ENCODE measurements at regions of chr12 and their contacts with region 1.

Region 1: DNA sequence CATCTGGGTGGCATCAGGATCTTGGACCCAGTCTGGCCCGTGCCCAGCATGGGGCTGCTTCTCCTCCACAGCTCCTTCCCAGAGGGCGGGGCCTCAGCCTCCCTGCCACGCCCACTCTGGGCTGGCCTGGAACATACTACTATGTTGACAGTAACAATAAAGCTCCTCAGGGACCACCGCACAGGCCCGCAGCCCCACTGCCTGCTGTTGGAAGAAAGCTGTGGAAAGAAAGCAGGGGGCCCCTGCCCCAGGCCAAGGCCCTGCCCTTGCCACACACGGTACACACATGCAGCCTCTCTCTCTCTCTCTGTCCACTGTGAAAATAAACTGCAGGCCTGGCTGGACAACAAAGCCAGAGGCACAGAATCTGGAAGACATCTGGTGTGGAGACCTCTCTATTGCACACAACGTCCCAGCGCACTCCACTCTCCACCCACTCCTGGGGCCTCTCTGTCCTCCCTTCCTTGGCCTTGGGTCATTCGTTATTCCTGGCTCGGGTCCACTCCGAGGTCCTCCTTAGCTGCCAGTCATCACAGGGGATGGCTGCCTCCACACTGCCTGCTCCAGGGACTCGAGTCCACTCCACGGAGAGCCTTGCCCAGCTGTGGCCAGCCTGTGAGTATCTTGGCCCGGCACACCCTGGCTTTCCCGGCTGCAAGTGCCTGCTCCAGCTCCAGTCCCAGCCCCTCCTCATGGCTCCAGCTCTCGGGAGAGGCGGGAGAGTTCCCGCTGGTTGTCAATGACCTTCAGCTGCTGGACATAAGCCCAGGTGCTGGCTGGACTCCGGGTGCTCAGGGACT is 11.8 kb upstream of the ENDOU start:
- DNase-seq: no peak
- CTCF ChIP-seq: no peak

Region 2: DNA sequence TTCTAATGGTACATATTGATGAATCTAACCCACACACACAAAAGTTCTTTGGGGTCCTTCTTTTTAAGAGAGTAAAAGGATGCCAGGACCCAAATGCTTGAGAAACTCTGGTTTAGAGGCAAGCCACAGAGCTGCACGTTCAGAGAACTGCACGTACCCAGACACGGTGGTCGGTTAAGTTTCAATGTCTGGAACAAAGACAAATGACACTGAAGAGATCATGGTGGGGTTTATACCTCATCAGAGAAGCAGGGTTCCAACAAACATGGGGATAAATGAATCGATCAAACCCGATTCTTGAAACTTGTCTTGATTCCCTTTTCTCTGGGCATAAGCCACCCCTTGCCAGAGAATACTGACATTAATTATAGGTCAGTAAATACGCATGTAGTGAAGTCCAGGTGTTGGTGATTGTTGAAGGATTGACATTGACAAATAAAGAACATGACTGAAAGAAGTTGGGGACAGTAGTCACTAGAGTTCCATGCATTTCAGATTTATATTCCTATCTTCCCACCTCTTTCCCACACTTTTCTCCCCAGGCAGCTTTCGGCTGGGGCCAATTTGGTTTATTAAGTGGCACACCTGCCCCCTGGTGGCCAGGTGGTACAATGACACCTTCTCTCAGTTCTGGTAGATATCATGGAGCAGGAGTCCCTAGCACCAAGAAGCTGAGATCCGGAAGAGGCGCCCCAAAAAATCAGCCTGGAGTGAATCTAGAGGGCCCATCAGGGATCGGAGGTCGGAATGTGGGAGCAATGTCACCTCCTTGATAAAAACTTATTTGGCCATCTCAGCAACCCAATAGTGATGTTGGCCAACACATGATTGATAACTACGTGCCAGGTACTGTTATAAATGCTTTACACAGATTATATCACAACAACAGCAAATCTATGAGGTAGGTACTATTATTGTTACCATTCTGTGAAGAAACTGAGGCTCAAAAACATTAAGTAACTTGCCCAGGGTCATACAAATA is 100.4 kb after region 1 on chr12:
- in situ Hi-C with region 1: loop called (anchors 10 kb)
- DNase-seq: peak; percentile 68
- CTCF ChIP-seq: peak; percentile 90

Region 3: DNA sequence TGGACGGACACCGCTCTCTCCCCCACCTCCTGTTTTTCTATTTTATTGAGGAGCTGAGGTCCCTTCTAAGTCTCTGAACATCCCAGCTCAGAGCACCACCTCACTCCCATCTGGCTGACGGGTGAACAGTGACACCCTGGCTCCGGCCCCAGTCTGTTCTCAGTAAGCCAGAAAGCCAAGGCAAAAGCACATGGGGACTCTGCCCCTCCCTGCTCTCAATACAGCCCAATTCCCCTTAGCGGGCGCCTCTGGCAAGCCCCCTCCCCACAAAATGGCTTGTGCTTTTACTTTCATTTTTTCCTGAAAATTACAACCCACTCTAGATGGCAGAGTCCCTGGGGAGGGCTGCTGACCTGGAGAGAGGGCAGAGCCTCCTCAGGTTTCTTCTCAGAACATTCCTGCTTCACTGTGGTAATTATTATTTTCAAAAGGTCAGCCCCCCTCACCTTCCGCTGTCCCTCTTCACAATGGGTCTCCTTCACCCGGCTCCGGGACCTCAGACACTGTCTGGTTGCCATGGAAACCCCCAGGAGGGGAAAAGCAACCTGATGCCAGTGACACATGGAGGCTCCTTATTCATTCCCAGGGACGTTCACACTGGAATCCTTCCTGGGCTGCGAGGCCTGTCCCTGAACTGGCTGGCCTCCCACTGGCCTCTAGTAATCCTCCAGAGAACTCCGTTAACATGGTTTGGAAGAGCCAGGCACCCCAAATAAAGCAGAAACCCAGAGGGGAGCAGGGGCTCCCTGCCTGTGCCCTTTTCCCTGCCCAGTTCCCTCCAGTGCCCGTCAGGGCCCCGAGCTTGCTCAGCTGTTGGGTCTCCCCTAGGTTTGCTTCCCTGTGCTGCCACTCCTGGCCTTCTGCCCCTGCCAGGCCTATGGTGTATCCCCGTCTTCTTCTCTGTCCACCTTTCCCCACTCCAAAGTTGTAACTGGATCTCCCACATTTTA is 251.3 kb after region 1 on chr12:
- in situ Hi-C with region 1: no loop called
- DNase-seq: no peak
- CTCF ChIP-seq: no peak

Measured in GM13976 (cell line).